ENCODE measurements at regions of chr12 and their contacts with region 1.

Region 1: GRCh38 chr12:120761519-120761934 is 35.9 kb downstream of the ACADS start:
- DNase-seq: peak; percentile 77 to 83
- ATAC-seq: peak; percentile 85 to 88
- H3K4me3 ChIP-seq: peak overlapping the region; percentile 12 to 35 (median 22)
- H3K27ac ChIP-seq: peak overlapping the region; percentile 93 to 98 (median 94)
- H3K4me1 ChIP-seq: peaks cover 44 to 49% of the 10 kb centered on the region in 2 donors
- H3K27me3 ChIP-seq: no peaks in the 10 kb centered on the region
- CTCF ChIP-seq: no peak
- POLR2A ChIP-seq: peak in 1 of 2 donors; percentile 49

Region 2: GRCh38 chr12:120257041-120257821 is 504.3 kb before region 1 on chr12:
- in situ Hi-C with region 1: no loop called
- intact Hi-C with region 1: no loop called
- DNase-seq: peak; percentile 59 to 80
- ATAC-seq: peak; percentile 75 to 78
- H3K4me3 ChIP-seq: no peak overlapping the region
- H3K27ac ChIP-seq: peak overlapping the region; percentile 77 to 99 (median 92)
- H3K4me1 ChIP-seq: peaks cover 78 to 85% of the 10 kb centered on the region in 2 donors
- H3K27me3 ChIP-seq: no peaks in the 10 kb centered on the region
- CTCF ChIP-seq: no peak
- POLR2A ChIP-seq: peak in 1 of 2 donors; percentile 42

Region 3: DNA sequence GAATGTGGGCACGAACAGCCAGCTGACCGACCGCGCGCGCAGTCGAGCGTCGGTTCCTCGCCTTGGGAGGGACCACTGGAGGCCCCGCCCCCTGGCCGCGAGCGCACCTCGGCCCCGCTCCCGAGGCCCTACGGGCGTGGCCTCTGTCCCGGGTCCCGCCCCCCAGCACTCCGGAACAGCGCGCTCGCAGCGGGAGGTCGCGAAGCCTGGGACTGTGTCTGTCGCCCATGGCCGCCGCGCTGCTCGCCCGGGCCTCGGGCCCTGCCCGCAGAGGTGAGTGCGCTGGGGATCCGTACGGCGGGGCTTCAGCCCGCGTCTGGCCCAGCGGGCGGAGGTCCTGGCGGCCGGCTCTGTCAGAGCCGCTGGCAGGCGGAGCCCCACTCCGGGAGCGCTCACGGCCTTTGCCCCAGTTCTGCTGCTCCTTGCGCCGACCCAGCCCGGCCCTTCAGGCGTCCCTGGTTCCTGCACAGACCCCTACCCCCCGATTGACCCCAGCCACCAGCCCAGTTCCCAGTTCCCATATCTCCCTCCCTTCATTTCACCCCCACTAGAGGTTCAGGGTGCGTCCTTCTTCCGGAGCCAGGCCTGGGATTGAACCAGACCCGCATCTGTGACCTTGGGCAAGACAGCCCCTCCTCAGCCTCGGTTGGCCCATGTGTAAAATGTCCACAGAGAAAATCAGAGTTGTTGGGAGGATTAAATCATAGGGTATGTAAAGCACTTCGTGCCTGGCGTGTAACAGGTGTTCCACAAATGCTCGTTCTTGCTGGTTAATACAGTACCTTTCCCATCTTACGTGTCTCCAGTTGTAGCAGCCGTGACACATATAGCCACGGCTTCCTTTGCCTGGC is 35.6 kb before region 1 on chr12 and contains the start of gene ACADS:
- in situ Hi-C with region 1: no loop called
- intact Hi-C with region 1: loop called (anchors 1 kb)
- DNase-seq: peak; percentile 85 to 88
- ATAC-seq: peak; percentile 83 to 89
- H3K4me3 ChIP-seq: peak within 1 kb of the TSS; percentile 78 to 92 (median 86)
- H3K27ac ChIP-seq: peak within 1 kb of the TSS; percentile 92 to 96 (median 94)
- H3K4me1 ChIP-seq: peaks cover 16 to 30% of the 10 kb centered on the region in 2 donors
- H3K27me3 ChIP-seq: no peaks in the 10 kb centered on the region
- CTCF ChIP-seq: peak in 1 of 5 experiments; percentile 25
- POLR2A ChIP-seq: peak; percentile 86 to 88
- total RNA-seq, gene ACADS: 166 to 224 (median 200) TPM

Region 4: GRCh38 chr12:120783197-120783596 is 21.7 kb after region 1 on chr12:
- in situ Hi-C with region 1: no loop called
- intact Hi-C with region 1: no loop called
- DNase-seq: no peak
- ATAC-seq: peak; percentile 90 to 93
- H3K4me3 ChIP-seq: peak overlapping the region in 1 of 4 donors; percentile 10
- H3K27ac ChIP-seq: peak overlapping the region; percentile 60 to 81 (median 78)
- H3K4me1 ChIP-seq: peaks cover 0 to 16% of the 10 kb centered on the region in 2 donors
- H3K27me3 ChIP-seq: no peaks in the 10 kb centered on the region
- CTCF ChIP-seq: no peak
- POLR2A ChIP-seq: no peak

Region 5: DNA sequence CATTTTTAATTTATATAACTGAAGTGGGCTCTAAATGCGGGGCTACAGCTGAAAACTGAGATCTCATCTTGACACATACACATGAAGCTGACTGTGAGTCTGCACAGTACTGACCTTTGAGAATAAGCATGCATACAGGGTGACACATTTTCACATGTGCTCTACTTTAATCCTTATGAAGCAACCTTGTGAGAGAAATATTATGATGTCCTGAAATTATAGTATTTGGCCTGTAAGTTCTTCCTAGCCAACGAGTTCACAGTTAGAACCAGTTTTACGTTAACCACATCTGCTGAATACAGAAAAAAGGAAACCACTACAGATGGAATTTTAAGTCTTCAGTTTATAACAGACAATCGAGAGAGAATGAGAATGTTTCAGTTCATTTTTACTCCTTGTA is 72.3 kb after region 1 on chr12:
- in situ Hi-C with region 1: no loop called
- intact Hi-C with region 1: loop called (anchors 2 kb)
- DNase-seq: peak; percentile 16 to 38
- ATAC-seq: peak; percentile 94 to 96
- H3K4me3 ChIP-seq: no peak overlapping the region
- H3K27ac ChIP-seq: peak overlapping the region; percentile 78 to 80 (median 78)
- H3K4me1 ChIP-seq: peaks cover 59 to 68% of the 10 kb centered on the region in 2 donors
- H3K27me3 ChIP-seq: no peaks in the 10 kb centered on the region
- CTCF ChIP-seq: no peak
- POLR2A ChIP-seq: no peak

Region 6: DNA sequence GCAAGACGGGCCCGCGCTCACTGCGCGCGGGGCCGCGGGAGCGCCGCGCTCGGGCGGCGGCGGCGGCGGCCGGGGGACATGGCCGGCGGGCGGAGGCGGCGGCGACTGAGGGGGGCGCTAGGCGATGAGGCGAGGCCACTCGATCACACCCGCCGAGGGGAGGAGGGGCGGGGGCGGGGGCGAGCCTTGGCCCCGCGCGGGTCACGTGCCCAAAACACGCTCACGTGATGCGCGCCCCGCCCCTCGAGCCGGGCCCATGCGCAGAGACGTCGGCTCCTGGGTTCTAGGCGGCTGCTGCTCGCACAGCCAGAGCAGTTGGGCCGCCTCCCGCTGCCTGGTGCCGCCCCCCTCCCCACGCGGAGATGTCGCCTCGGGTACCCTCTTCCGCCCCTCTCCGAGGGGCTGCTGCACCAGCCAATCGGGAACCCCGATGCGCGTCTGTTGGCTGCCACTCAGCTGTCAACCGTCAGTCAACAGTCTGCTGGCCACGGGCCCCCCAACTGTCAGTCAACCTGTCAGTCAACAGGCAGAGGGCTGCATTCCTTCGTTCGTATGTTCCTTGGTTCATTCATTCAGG is 142.8 kb after region 1 on chr12 and contains the start of gene SPPL3:
- in situ Hi-C with region 1: no loop called
- intact Hi-C with region 1: loop called (anchors 2 kb)
- DNase-seq: peak; percentile 82 to 89
- ATAC-seq: peak; percentile 84 to 85
- H3K4me3 ChIP-seq: peak within 1 kb of the TSS; percentile 89 to 99 (median 96)
- H3K27ac ChIP-seq: peak within 1 kb of the TSS; percentile 91 to 98 (median 94)
- H3K4me1 ChIP-seq: peaks cover 27 to 30% of the 10 kb centered on the region in 2 donors
- H3K27me3 ChIP-seq: no peaks in the 10 kb centered on the region
- CTCF ChIP-seq: peak in 1 of 5 experiments; percentile 33
- POLR2A ChIP-seq: peak; percentile 76 to 86
- total RNA-seq, gene SPPL3: 10.1 to 21.3 (median 10.6) TPM

Region 7: GRCh38 chr12:122090759-122091515 is 1329.4 kb after region 1 on chr12:
- in situ Hi-C with region 1: no loop called
- intact Hi-C with region 1: loop called (anchors 5 kb)
- DNase-seq: peak in 1 of 2 donors; percentile 76
- ATAC-seq: peak; percentile 63 to 69
- H3K4me3 ChIP-seq: no peak overlapping the region
- H3K27ac ChIP-seq: peak overlapping the region; percentile 90 to 97 (median 94)
- H3K4me1 ChIP-seq: peaks cover 92 to 100% of the 10 kb centered on the region in 2 donors
- H3K27me3 ChIP-seq: no peaks in the 10 kb centered on the region
- CTCF ChIP-seq: no peak
- POLR2A ChIP-seq: no peak